ENCODE measurements at regions of chr5 and their contacts with region 1.

Region 1: GRCh38 chr5:43066799-43067741 is 27.0 kb upstream of the ANXA2R start:
- DNase-seq: peak; percentile 86 to 91 (median 90)
- ATAC-seq: peak; percentile 66 to 79 (median 76)
- H3K4me3 ChIP-seq: peak overlapping the region; percentile 42 to 95 (median 82)
- H3K27ac ChIP-seq: peak overlapping the region; percentile 90 to 100 (median 99)
- H3K4me1 ChIP-seq: peaks cover 5 to 45% (median 23%) of the 10 kb centered on the region in 12 donors
- H3K27me3 ChIP-seq: no peaks in the 10 kb centered on the region
- CTCF ChIP-seq: no peak
- POLR2A ChIP-seq: no peak

Region 2: GRCh38 chr5:42908509-42909488 is 158.3 kb before region 1 on chr5:
- intact Hi-C with region 1: loop called in 1 of 10 experiments (anchors 10 kb)
- DNase-seq: peak; percentile 87 to 94 (median 92)
- ATAC-seq: peak; percentile 91 to 95 (median 94)
- H3K4me3 ChIP-seq: peak overlapping the region in 11 of 12 donors; percentile 37 to 59 (median 57)
- H3K27ac ChIP-seq: peak overlapping the region in 1 of 12 donors; percentile 0
- H3K4me1 ChIP-seq: peaks cover 0 to 6% (median 1%) of the 10 kb centered on the region in 12 donors
- H3K27me3 ChIP-seq: peaks cover 0 to 6% (median 0%) of the 10 kb centered on the region in 9 donors
- CTCF ChIP-seq: peak; percentile 55 to 94 (median 82)
- POLR2A ChIP-seq: no peak

Region 3: DNA sequence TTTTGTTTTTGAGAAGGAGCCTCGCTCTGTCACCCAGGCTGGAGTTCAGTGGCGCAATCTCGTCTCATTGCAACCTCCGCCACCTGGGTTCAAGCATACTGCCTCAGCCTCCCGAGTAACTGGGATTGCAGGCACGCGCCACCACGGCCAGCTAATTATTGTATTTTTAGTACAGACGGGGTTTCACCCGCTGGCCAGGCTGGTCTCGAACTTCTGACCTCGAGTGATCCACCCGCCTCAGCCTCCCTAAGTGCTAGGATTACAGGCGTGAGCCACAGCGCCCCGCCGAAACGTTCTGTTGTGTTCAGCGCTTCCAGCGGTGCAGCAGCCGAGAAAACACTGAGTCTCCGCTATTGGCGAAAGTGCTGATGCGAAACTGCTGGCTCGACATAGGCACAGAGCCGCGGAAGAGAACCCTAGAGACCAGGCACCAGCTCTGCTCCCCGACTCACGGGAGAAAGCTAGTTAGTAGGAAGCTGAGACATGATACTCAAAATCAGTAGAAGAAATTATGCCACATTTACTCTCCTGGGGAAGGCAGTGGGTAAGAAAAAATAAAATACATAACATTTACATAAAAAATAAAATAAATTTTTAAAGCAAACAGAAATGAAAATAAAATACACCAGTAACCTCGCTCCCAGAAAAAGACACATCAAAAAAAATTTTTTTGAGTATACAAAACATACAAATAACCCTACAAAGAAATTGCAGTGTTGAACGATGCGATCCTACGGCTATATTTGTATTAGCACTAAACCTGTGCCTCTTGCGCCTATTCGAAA is 58.5 kb before region 1 on chr5:
- intact Hi-C with region 1: loop called in 2 of 10 experiments (anchors 1 to 2 kb)
- DNase-seq: peak; percentile 87 to 93 (median 89)
- ATAC-seq: peak; percentile 83 to 90 (median 88)
- H3K4me3 ChIP-seq: peak overlapping the region; percentile 22 to 71 (median 56)
- H3K27ac ChIP-seq: peak overlapping the region; percentile 68 to 98 (median 92)
- H3K4me1 ChIP-seq: peaks cover 0 to 27% (median 4%) of the 10 kb centered on the region in 12 donors
- H3K27me3 ChIP-seq: peaks cover 0 to 75% (median 32%) of the 10 kb centered on the region in 9 donors
- CTCF ChIP-seq: peak in 2 of 12 donors; percentile 5 to 15
- POLR2A ChIP-seq: peak in 1 of 2 donors; percentile 17

Region 4: DNA sequence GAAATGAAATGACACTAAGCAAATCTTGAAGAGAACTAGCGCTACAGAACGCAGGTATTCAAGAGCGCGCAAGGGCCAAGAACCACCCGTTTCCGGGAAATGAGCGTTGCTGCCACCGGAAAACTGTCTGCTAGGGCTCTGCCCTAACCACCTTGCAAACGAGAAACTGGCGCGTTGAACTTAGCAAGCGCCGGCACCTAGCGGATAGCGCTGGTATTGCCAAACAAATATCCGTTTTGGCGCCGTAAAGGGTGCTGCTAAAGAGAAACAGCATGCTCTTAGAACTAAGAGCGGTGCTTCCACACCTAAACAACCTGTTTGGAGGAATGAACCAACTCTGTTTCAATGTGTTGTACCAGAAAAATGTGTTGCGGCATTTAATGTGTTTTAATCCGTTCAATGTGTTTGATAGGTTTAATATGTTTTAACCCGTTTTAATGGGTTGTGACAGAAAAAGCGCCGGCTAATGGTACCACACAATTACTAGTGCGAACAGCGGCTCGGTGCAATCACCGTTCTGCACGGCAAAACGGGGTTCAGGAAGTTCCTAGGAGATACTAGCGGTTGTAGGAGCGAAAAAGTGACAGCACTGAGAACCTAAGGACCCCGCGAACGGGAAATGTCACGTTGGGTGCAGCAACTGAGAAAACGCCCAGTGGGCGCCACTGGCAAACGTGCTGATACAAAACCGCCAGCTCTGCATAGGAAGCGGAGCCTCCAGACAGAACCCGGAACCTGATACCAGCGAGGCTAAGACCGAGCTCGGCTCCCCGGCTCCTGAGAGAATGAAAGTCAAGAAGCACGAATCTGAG is 26.6 kb before region 1 on chr5 and contains the start of gene ANXA2R:
- intact Hi-C with region 1: loop called in 5 of 10 experiments (anchors 1 to 2 kb)
- DNase-seq: peak; percentile 87 to 90 (median 89)
- ATAC-seq: peak; percentile 59 to 70 (median 68)
- H3K4me3 ChIP-seq: peak within 1 kb of the TSS; percentile 28 to 77 (median 66)
- H3K27ac ChIP-seq: peak within 1 kb of the TSS; percentile 89 to 99 (median 95)
- H3K4me1 ChIP-seq: peaks cover 0 to 42% (median 7%) of the 10 kb centered on the region in 12 donors
- H3K27me3 ChIP-seq: peaks cover 0 to 80% (median 16%) of the 10 kb centered on the region in 9 donors
- CTCF ChIP-seq: peak; percentile 71 to 86 (median 80)
- POLR2A ChIP-seq: no peak
- total RNA-seq, gene ANXA2R: 0.49 to 2.4 (median 1.4) TPM

Region 5: DNA sequence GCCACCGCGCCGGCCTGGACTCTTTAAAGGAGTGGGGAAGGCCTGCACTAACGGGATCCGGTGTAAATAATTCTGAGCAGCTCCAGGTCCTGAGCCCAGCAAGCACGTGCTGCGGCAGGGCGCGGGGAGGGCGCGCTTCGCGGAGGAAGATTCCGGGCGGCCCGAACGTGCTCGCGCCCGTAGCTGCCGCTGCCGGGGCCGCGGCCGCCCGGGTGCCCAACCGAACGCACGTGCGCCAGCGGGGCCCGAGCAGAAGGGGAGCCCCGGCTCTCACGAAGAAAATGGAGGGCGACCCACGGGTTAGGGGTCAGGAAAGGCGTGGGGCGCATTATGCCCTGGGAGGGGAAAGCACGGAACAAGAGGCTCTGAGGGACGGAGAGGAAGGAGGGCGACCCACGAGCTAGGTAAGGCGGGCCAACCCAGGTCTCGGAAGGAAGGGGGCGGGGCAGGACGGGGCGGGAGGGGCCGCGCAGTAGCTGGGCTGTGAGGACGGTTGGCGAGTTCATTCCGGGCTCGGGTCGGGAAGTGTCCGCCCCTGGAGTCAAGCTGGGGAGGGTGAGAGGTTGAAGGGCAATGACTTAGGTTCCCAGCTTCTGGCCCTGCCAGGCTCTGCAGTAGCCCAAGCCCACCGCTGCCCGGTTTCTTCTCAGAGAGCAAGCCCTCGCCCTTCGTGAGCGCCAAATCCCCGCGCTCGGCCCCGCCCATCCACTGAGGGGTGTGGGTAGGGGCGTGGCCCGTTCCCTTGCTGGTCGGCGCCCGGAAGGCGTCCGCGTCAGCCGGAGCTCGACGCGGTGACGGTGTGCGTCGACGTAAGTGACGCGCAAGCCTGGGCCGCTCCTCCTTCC is 53.9 kb after region 1 on chr5 and contains the start of gene ZNF131:
- intact Hi-C with region 1: loop called in 5 of 10 experiments (anchors 1 to 5 kb)
- DNase-seq: peak; percentile 96 to 98 (median 96)
- ATAC-seq: peak; percentile 98 to 99 (median 98)
- H3K4me3 ChIP-seq: peak within 1 kb of the TSS; percentile 25 to 97 (median 82)
- H3K27ac ChIP-seq: peak within 1 kb of the TSS; percentile 86 to 100 (median 98)
- H3K4me1 ChIP-seq: peaks cover 4 to 34% (median 22%) of the 10 kb centered on the region in 12 donors
- H3K27me3 ChIP-seq: no peaks in the 10 kb centered on the region
- CTCF ChIP-seq: no peak
- POLR2A ChIP-seq: peak in 1 of 2 donors; percentile 7
- total RNA-seq, gene ZNF131: 10.9 to 21.6 (median 13.3) TPM

Region 6: GRCh38 chr5:43171914-43172313 is 104.8 kb after region 1 on chr5:
- intact Hi-C with region 1: no loop called
- DNase-seq: no peak
- ATAC-seq: no peak
- H3K4me3 ChIP-seq: no peak overlapping the region
- H3K27ac ChIP-seq: no peak overlapping the region
- H3K4me1 ChIP-seq: no peaks in the 10 kb centered on the region
- H3K27me3 ChIP-seq: no peaks in the 10 kb centered on the region
- CTCF ChIP-seq: no peak
- POLR2A ChIP-seq: no peak

Measured in heart left ventricle (tissue), 16 donors.